ENCODE measurements at regions of chr11 and their contacts with region 1.

Region 1: GRCh38 chr11:47731475-47731874 is 16.3 kb upstream of the AGBL2 start:
- DNase-seq: no peak
- ATAC-seq: no peak
- H3K4me3 ChIP-seq: no peak overlapping the region
- H3K27ac ChIP-seq: no peak overlapping the region
- H3K4me1 ChIP-seq: no peaks in the 10 kb centered on the region
- H3K27me3 ChIP-seq: no peaks in the 10 kb centered on the region
- CTCF ChIP-seq: no peak

Region 2: GRCh38 chr11:47628026-47628425 is 103.4 kb before region 1 on chr11:
- intact Hi-C with region 1: loop called in 1 of 2 experiments (anchors 5 kb)
- DNase-seq: no peak
- ATAC-seq: no peak
- H3K4me3 ChIP-seq: no peak overlapping the region
- H3K27ac ChIP-seq: no peak overlapping the region
- H3K4me1 ChIP-seq: no peaks in the 10 kb centered on the region
- H3K27me3 ChIP-seq: no peaks in the 10 kb centered on the region
- CTCF ChIP-seq: no peak

Region 3: GRCh38 chr11:47642099-47642855 is 89.2 kb before region 1 on chr11 and contains the start of gene MTCH2:
- intact Hi-C with region 1: loop called in 1 of 2 experiments (anchors 5 kb)
- DNase-seq: peak; percentile 95 to 98
- ATAC-seq: peak; percentile 97 to 99 (median 98)
- H3K4me3 ChIP-seq: peak within 1 kb of the TSS; percentile 89
- H3K27ac ChIP-seq: peak within 1 kb of the TSS; percentile 95
- H3K4me1 ChIP-seq: peaks cover 12% of the 10 kb centered on the region
- H3K27me3 ChIP-seq: no peaks in the 10 kb centered on the region
- CTCF ChIP-seq: peak; percentile 29
- total RNA-seq, gene MTCH2: 75.2 to 147 (median 100) TPM

Region 4: DNA sequence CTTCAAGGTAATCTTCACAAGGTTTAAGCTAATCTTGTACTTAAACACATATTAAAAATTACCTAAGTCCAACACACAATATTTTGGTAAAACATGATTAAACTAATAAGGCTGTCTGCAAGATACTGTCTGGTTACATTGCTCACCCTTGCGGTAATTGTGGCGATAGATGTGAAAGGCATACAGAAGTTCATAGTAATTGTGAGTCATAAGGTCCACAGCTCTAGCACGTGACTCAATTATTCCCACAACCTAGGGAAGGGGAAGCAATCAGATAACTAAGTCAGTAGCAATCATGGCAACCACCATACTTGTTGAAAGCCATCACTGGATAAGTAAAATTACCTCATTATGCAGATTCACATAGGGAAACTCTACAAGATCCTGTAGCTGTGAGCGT is 66.2 kb after region 1 on chr11:
- intact Hi-C with region 1: loop called in 1 of 2 experiments (anchors 5 kb)
- DNase-seq: no peak
- ATAC-seq: no peak
- H3K4me3 ChIP-seq: no peak overlapping the region
- H3K27ac ChIP-seq: no peak overlapping the region
- H3K4me1 ChIP-seq: no peaks in the 10 kb centered on the region
- H3K27me3 ChIP-seq: no peaks in the 10 kb centered on the region
- CTCF ChIP-seq: no peak

Region 5: GRCh38 chr11:47819743-47820142 is 88.3 kb after region 1 on chr11:
- intact Hi-C with region 1: loop called in 1 of 2 experiments (anchors 5 kb)
- DNase-seq: no peak
- ATAC-seq: no peak
- H3K4me3 ChIP-seq: no peak overlapping the region
- H3K27ac ChIP-seq: no peak overlapping the region
- H3K4me1 ChIP-seq: no peaks in the 10 kb centered on the region
- H3K27me3 ChIP-seq: no peaks in the 10 kb centered on the region
- CTCF ChIP-seq: no peak

Region 6: DNA sequence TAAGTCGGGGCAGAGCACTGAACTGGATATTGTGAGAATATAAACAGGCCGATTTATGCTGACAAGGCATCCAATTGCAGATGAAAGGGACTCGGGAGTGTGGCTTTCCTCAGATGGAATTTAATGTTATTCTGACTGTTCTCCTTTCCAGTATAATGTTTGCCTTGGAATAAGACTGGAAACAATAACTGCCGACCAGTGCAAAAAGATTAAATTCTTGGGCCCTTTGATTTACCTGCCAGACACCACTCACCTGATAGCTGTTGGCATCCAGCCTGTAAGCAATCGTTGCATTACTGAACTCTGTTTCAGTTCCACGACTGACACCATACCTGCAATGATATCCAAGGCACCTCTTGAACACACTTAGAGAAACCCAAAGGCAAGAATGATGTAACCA is 105.8 kb after region 1 on chr11:
- intact Hi-C with region 1: no loop called
- DNase-seq: no peak
- ATAC-seq: no peak
- H3K4me3 ChIP-seq: no peak overlapping the region
- H3K27ac ChIP-seq: no peak overlapping the region
- H3K4me1 ChIP-seq: peaks cover under 1% of the 10 kb centered on the region
- H3K27me3 ChIP-seq: no peaks in the 10 kb centered on the region
- CTCF ChIP-seq: no peak